ENCODE measurements at regions of chr2 and their contacts with region 1.

Region 1: DNA sequence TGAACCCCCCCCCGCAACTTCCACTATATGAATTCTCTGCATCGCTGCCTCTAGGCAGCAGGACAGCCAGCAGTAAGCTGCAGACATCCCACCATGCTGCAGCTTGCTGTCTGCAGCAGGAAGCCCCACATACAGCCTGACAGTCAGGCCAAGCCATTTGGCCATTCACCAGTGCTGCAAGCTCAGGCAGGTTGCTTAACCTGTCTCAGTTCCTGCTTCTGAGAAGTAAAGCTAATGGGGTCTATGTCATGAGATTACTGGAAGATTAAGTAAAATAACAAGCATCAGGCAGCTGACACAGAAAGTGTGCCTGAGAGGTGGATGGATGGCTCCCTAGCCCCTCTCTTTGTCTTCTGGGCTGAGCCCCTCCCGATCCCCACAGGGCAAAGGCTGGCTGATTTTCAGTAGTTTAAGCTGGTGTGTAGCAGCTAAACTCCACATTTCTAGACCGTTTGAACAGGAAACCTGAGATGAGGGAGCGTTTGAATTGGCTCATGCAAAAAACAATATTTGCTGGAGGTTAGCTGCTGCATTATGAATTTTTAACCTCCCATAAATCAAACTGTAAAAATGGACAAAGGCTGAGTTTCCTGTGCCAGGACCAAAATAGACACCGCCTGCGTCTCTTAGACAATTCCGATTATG is 193.8 kb upstream of the ARL4C start:
- DNase-seq: peak in 1 of 2 experiments; percentile 43
- H3K4me3 ChIP-seq: no peak overlapping the region
- H3K27ac ChIP-seq: no peak overlapping the region
- H3K4me1 ChIP-seq: peaks cover 59% of the 10 kb centered on the region
- H3K27me3 ChIP-seq: no peaks in the 10 kb centered on the region
- CTCF ChIP-seq: no peak

Region 2: GRCh38 chr2:234288974-234289455 is 401.7 kb before region 1 on chr2:
- CTCF ChIA-PET with region 1: no interaction called
- POLR2A ChIA-PET with region 1: interaction called, 18 read pairs
- intact Hi-C with region 1: no loop called
- DNase-seq: peak in 1 of 2 experiments; percentile 58
- H3K4me3 ChIP-seq: no peak overlapping the region
- H3K27ac ChIP-seq: no peak overlapping the region
- H3K4me1 ChIP-seq: peaks cover 23% of the 10 kb centered on the region
- H3K27me3 ChIP-seq: no peaks in the 10 kb centered on the region
- CTCF ChIP-seq: peak; percentile 87

Region 3: DNA sequence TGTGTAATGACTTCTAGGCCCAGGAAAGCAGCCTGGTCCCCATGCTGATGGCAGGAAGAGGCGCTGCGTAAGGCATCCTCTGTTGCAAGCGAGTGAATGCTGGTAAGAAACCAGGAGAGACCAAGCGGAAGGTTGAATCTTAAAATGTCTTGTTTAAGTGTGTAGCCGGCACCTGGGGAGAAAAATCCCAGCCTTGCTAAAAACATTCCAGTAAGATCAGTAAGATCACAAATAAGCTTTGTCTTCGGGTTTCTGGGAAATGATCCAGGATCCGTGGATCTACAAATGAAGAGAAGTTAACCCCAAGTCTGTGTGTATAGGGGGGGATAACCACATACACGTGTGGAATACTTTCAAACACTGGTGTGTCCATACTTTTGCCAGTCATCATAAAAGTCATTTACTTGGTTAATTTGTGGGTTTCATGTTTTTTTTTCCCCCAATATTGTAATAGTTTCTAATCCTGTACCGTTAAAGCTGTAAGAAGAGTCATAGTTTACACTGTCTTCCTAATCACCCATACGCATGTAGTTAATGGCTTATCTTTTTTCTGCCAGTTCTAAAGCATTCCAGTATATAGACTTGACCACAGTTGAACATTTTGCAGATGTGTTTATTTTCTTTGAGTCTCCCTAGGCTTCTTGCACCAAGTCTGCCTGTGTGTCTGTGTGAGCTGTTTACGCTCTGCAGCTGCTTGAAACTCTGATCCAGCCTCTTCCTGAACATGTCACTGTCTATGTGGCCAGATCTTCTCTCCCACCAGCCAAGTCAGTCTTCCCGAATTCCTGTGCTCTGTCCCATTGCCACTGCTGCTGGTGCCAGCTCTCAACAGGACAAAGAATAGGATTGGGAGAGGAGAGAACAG is 57.9 kb before region 1 on chr2:
- CTCF ChIA-PET with region 1: no interaction called
- POLR2A ChIA-PET with region 1: no interaction called
- intact Hi-C with region 1: loop called (anchors 2 kb)
- DNase-seq: peak in 1 of 2 experiments; percentile 39
- H3K4me3 ChIP-seq: no peak overlapping the region
- H3K27ac ChIP-seq: 0 out of 2 replicates have a peak overlapping the region, but pooled peaks have one; percentile 27
- H3K4me1 ChIP-seq: peaks cover 32% of the 10 kb centered on the region
- H3K27me3 ChIP-seq: no peaks in the 10 kb centered on the region
- CTCF ChIP-seq: no peak